Spleen (tissue), 13 donors: ENCODE measurements at regions of chr22 and their contacts with region 1.

Region 1: GRCh38 chr22:17368554-17369438 is 464 bp upstream of the CECR2 start:
- DNase-seq: peak; percentile 73
- H3K4me3 ChIP-seq: peak overlapping the region; percentile 22 to 80 (median 53)
- H3K27ac ChIP-seq: peak overlapping the region in 5 of 8 donors; percentile 33 to 64 (median 52)
- H3K4me1 ChIP-seq: peaks cover 6 to 50% (median 29%) of the 10 kb centered on the region in 6 donors
- H3K27me3 ChIP-seq: peaks cover 8 to 96% (median 58%) of the 10 kb centered on the region in 7 donors
- CTCF ChIP-seq: no peak
- POLR2A ChIP-seq: no peak

Region 2: DNA sequence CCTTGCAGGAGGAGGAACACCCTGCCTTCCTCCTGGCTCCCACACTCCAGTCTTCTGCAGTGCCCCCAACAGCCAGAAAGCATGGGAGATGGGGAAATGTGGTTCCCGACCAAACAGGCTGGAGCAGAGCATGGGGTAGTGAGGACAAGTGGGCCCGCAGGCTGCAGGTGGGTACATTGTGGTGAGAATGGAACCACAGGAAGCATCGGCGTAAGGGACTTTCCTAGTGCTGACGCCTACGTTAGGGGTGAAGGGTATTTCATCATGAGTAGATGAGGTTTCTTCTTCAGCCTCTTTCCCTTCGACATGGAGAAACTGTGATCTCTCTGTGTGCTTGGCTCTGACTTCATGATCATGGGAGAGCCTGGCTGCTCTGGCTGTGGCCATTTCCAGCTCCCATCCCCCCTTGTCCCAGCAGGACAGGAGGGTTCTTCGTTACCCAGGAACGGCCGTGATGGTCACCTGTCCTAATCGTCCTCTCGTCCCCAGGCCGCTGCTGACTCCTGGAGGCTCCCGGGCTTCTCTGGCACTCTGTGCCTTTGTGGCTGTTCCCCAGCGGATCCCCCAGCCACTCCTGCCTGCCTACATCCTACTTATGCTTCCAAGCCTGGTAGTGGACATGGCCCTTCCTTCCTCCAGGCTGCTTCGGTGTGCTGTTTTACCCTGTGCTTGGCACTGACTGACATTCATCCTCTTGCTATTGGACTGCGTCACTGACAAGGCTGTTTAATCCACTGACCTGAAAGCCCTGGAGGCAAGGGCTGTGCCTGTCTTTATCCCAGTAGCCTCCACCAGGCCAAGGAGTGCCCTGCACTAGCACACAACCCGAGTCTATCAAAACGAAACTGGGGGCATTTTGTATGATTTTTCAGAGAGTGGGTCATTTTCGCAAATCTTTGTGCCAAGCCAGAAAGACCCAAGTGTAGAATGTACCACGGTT is 64.7 kb before region 1 on chr22:
- intact Hi-C with region 1: loop called (anchors 10 kb)
- DNase-seq: peak; percentile 79
- H3K4me3 ChIP-seq: no peak overlapping the region
- H3K27ac ChIP-seq: peak overlapping the region in 1 of 8 donors; percentile 10
- H3K4me1 ChIP-seq: peaks cover 6 to 16% (median 11%) of the 10 kb centered on the region in 6 donors
- H3K27me3 ChIP-seq: no peaks in the 10 kb centered on the region
- CTCF ChIP-seq: no peak
- POLR2A ChIP-seq: no peak

Region 3: DNA sequence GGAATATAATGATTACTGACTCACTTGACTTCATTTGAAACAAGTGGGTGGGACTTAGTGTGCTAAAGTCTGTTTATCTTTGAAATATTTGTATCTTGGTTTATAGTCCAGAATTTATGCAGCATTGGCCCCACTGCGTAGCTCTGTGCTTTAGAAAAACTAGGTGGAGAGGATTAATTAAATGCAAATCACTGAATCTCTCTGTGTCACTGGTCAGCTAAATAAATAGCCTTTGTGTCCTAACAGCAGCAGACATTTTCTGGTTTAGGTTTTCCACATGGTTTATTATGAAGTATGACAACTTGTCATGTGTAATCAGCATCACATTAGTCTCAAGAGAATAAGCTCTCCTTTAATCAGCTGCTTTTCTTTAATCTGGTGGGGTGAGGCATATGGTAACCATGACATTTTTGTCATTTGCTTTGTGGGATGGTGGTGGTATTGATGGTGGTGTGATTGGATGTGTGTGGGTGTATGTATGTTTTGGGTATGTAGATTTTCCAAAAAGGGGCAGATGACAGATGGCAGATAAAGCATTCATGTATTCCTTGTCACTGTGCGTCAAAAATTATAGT is 303.7 kb after region 1 on chr22:
- intact Hi-C with region 1: no loop called
- DNase-seq: no peak
- H3K4me3 ChIP-seq: no peak overlapping the region
- H3K27ac ChIP-seq: peak overlapping the region in 1 of 8 donors; percentile 43
- H3K4me1 ChIP-seq: peaks cover 0 to 58% (median 11%) of the 10 kb centered on the region in 6 donors
- H3K27me3 ChIP-seq: no peaks in the 10 kb centered on the region
- CTCF ChIP-seq: no peak
- POLR2A ChIP-seq: no peak